ENCODE measurements at regions of chr1 and their contacts with region 1.

Region 1: DNA sequence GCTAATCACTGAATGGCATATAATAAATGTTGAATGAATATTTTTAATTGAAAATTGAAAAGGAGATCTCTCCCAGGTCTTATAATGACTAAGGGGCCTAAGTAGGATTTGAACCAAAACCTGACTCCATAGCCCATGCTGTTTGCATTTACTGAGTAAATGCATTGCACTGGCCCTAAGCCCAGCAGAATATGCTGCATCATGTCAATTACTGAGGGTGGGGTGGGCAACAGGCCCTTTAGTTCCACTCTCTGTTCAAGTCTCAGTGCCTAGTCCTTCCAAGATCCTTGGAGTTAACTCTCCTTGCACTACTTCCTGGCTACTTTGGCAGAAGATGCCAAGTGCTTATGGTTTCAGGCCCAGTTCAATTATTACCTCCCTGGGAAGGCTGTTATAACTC is 203.8 kb upstream of the DAB1 start:
- DNase-seq: no peak

Region 2: DNA sequence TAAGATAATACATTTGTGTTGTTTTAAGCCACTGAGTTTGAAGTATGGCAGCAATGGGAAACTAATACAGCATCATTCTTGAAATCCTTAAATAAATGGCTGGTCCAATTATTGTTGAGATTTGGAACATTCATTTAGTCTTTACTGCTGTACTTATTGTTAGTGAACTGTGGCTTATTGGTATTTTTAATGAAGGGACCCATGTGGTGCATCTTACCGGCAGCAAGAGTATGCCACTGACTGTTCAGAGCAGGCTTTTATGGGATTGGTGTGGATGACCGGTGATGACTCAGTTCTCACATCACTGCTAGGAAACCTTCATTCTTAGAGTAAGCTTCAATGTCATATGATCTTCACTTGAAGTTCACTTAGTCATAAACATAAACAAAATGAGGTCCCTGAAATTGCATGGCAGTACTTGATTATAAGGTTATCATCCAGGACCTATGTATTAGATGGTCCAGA is 951.0 kb before region 1 on chr1:
- intact Hi-C with region 1: loop called in 1 of 2 experiments (anchors 5 kb)
- DNase-seq: no peak

Measured in posterior vena cava (tissue), 2 donors.